ENCODE measurements at regions of chr2 and their contacts with region 1.

Region 1: DNA sequence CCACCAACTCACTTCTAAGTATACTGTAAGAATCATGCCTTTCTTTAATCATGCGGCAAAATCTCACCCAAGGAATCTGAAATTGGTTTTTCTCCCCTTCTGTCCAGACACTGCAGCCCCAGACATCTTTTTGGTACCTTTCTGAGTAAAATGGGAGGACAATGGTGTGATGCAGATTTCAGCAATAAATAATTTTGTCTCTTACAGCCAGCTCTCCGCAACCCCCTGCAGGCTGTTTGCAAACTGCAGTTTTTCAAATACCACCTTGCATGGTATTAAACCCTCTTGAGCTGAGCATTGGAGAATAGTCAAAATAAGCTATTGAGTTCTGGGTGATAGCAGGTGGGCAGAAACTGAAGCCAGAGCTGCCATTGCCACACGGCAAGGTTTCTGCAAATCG is 32.2 kb downstream of the GPR39 start:
- DNase-seq: peak; percentile 49
- H3K4me3 Mint-ChIP-seq: no peak overlapping the region
- H3K27ac Mint-ChIP-seq: no peak overlapping the region
- H3K4me1 Mint-ChIP-seq: peaks cover 27% of the 10 kb centered on the region
- H3K27me3 Mint-ChIP-seq: no peaks in the 10 kb centered on the region
- CTCF ChIP-seq: peak; percentile 66

Region 2: DNA sequence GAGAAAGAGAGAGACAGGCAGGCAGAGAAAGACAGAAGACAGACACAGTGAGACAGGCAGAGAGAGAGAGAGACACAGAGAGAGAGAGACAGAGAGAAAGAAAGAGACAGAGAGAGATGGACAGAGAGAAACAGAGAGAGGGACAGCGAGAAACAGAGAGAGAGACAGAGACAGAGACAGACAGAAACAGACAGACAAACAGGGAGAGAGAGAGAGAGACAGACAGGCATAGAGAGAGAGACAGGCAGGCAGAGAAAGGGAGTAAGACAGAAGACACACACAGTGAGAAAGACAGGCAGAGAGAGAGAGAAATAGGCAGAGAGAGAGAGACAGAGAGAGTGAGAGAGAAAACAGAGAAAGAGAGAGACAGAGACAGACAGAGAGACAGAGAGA is 181.7 kb before region 1 on chr2:
- CTCF ChIA-PET with region 1: no interaction called
- intact Hi-C with region 1: loop called (anchors 10 kb)
- DNase-seq: no peak
- H3K4me3 Mint-ChIP-seq: no peak overlapping the region
- H3K27ac Mint-ChIP-seq: no peak overlapping the region
- H3K4me1 Mint-ChIP-seq: no peaks in the 10 kb centered on the region
- H3K27me3 Mint-ChIP-seq: no peaks in the 10 kb centered on the region
- CTCF ChIP-seq: no peak